Activated CD4-positive, alpha-beta T cell treated with anti-CD3 and anti-CD28 coated beads for 36 hours (primary cell): ENCODE measurements at regions of chr10 and their contacts with region 1.

Region 1: DNA sequence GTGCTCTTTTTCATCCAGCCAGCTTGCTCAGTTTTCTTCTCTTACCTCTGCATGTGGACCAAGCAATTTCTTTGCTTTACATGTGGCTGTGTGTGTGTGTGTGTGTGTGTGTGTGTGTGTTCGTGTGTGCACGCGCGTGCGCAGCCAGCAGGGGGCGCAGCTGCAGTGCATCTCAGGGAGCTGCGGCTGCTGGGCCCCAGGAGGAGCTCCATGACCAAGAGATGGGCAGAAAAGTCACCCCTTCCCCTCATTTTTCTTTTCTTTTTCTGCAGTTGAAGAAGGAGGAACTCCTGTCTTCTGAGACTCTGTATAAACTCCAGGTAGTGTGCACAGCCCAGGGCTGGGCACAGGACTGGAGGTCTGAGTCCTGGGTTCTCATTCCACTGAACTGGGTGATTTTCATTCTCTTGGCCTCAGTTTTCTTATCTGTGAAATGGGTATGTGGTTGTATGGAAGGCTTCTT is 41.8 kb downstream of the BLNK start:
- DNase-seq: peak; percentile 86
- ATAC-seq: peak; percentile 77
- H3K4me3 Mint-ChIP-seq: no peak overlapping the region
- H3K27ac Mint-ChIP-seq: no peak overlapping the region
- H3K4me1 Mint-ChIP-seq: no peaks in the 10 kb centered on the region
- H3K27me3 Mint-ChIP-seq: no peaks in the 10 kb centered on the region

Region 2: DNA sequence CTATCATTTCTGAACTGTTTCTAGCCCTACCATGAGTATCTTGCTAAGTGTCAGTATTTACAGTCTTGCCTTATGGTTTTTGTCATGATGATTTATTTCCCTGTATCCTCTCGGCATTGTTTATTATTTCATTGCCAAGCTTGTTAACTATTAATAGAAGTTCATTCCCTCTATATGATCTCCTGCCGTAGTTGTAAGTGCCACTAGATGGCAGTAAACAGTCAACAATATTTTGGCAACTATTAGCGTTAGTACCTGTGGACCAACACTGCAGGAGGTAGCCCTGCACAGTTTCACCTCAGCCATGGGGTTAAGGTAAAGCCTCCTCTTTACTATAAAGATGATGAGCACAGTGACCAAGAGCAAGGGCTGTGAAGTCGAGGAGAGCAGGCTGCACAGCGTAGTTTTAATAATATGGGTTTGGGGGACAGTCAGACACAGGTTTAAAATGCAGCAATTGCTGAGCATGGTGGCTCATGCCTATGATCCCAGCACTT is 212.4 kb before region 1 on chr10:
- CTCF ChIA-PET with region 1: interaction called, 10 read pairs
- POLR2A ChIA-PET with region 1: no interaction called
- intact Hi-C with region 1: loop called (anchors 1 to 5 kb)
- DNase-seq: peak; percentile 39
- ATAC-seq: peak; percentile 92
- H3K4me3 Mint-ChIP-seq: no peak overlapping the region
- H3K27ac Mint-ChIP-seq: no peak overlapping the region
- H3K4me1 Mint-ChIP-seq: no peaks in the 10 kb centered on the region
- H3K27me3 Mint-ChIP-seq: no peaks in the 10 kb centered on the region

Region 3: DNA sequence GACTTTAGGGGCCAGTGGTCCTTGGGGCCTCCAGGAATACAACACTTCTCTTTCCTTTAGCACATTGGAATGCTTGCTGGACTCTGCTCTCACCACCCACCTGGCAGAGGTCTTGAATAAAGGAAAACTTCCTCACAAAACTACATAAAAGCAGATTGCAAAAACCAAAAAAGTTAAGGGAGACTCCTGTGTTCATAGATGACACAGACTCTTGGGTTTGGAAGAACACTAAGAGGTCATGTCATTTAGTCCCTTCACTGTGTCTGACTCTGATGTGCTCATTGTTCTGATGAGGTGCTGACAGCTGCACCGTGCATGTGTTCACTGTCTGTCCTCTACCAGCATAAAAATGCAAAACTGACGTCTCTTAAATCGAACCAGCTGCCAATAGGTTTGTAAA is 30.4 kb after region 1 on chr10:
- CTCF ChIA-PET with region 1: interaction called, 12 read pairs
- POLR2A ChIA-PET with region 1: no interaction called
- intact Hi-C with region 1: no loop called
- DNase-seq: no peak
- ATAC-seq: no peak
- H3K4me3 Mint-ChIP-seq: no peak overlapping the region
- H3K27ac Mint-ChIP-seq: no peak overlapping the region
- H3K4me1 Mint-ChIP-seq: no peaks in the 10 kb centered on the region
- H3K27me3 Mint-ChIP-seq: no peaks in the 10 kb centered on the region

Region 4: GRCh38 chr10:96287392-96288105 is 58.0 kb after region 1 on chr10:
- CTCF ChIA-PET with region 1: interaction called, 64 read pairs
- POLR2A ChIA-PET with region 1: no interaction called
- intact Hi-C with region 1: no loop called
- DNase-seq: no peak
- ATAC-seq: peak; percentile 42
- H3K4me3 Mint-ChIP-seq: no peak overlapping the region
- H3K27ac Mint-ChIP-seq: peak overlapping the region; percentile 49
- H3K4me1 Mint-ChIP-seq: peaks cover 16% of the 10 kb centered on the region
- H3K27me3 Mint-ChIP-seq: no peaks in the 10 kb centered on the region

Region 5: DNA sequence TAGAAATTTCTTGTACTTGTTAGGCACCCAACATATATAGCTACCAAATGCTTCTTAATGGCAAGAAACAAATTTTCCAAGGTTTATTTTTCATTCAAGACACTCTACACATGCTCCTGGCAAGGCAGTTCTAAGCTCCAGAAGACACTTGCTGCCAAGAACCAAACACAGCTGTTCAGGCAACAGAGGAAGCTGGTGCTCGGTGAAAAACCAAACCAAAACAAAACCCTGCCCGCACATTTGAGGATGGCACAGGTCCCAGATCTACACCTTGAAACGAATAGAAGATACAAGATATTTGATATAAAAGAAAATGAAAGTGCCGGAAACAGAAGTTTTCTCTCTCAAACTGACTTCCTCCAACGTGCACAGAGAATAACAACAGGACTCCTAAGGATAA is 69.8 kb after region 1 on chr10:
- CTCF ChIA-PET with region 1: interaction called, 64 read pairs
- POLR2A ChIA-PET with region 1: no interaction called
- intact Hi-C with region 1: no loop called
- DNase-seq: peak; percentile 20
- ATAC-seq: no peak
- H3K4me3 Mint-ChIP-seq: peak overlapping the region; percentile 47
- H3K27ac Mint-ChIP-seq: peak overlapping the region; percentile 76
- H3K4me1 Mint-ChIP-seq: peaks cover 62% of the 10 kb centered on the region
- H3K27me3 Mint-ChIP-seq: peaks cover 11% of the 10 kb centered on the region

Region 6: GRCh38 chr10:96334616-96335526 is 105.3 kb after region 1 on chr10:
- CTCF ChIA-PET with region 1: interaction called, 60 read pairs
- POLR2A ChIA-PET with region 1: no interaction called
- intact Hi-C with region 1: loop called (anchors 1 kb)
- DNase-seq: peak; percentile 12
- ATAC-seq: no peak
- H3K4me3 Mint-ChIP-seq: no peak overlapping the region
- H3K27ac Mint-ChIP-seq: no peak overlapping the region
- H3K4me1 Mint-ChIP-seq: peaks cover 21% of the 10 kb centered on the region
- H3K27me3 Mint-ChIP-seq: peaks cover 4% of the 10 kb centered on the region